CD4-positive, alpha-beta memory T cell (primary cell): ENCODE measurements at regions of chr2 and their contacts with region 1.

Region 1: GRCh38 chr2:135531231-135532228 is at the start of gene R3HDM1:
- DNase-seq: peak in 4 of 5 donors; percentile 98 to 99 (median 98)
- H3K4me3 ChIP-seq: peak within 1 kb of the TSS; percentile 86 to 98
- H3K4me3 Mint-ChIP-seq: no peak within 1 kb of the TSS
- H3K27ac ChIP-seq: peak within 1 kb of the TSS; percentile 89
- H3K27ac Mint-ChIP-seq: peak within 1 kb of the TSS in 6 of 7 donors; percentile 59 to 91 (median 78)
- H3K4me1 ChIP-seq: peaks cover 29% of the 10 kb centered on the region
- H3K4me1 Mint-ChIP-seq: peaks cover 11 to 25% (median 18%) of the 10 kb centered on the region in 4 donors
- H3K27me3 ChIP-seq: no peaks in the 10 kb centered on the region
- H3K27me3 Mint-ChIP-seq: no peaks in the 10 kb centered on the region
- total RNA-seq, gene R3HDM1: 40.5 to 42.3 TPM

Region 2: GRCh38 chr2:134918526-134919340 is 612.8 kb before region 1 on chr2 and contains the start of gene CCNT2:
- CTCF ChIA-PET with region 1: no interaction called
- POLR2A ChIA-PET with region 1: interaction called, 17 read pairs
- intact Hi-C with region 1: loop called (anchors 1 kb)
- DNase-seq: peak; percentile 99 to 100 (median 100)
- H3K4me3 ChIP-seq: peak within 1 kb of the TSS; percentile 68 to 94
- H3K4me3 Mint-ChIP-seq: peak within 1 kb of the TSS; percentile 90 to 99 (median 97)
- H3K27ac ChIP-seq: peak within 1 kb of the TSS; percentile 95
- H3K27ac Mint-ChIP-seq: peak within 1 kb of the TSS; percentile 93 to 99 (median 98)
- H3K4me1 ChIP-seq: peaks cover 52% of the 10 kb centered on the region
- H3K4me1 Mint-ChIP-seq: peaks cover 22 to 61% (median 43%) of the 10 kb centered on the region in 4 donors
- H3K27me3 ChIP-seq: no peaks in the 10 kb centered on the region
- H3K27me3 Mint-ChIP-seq: peaks cover 0 to 4% of the 10 kb centered on the region in 2 donors
- total RNA-seq, gene CCNT2: 75.4 to 80.6 TPM

Region 3: GRCh38 chr2:135052042-135052876 is 479.3 kb before region 1 on chr2 and contains the start of gene RAB3GAP1:
- CTCF ChIA-PET with region 1: no interaction called
- POLR2A ChIA-PET with region 1: interaction called, 7 read pairs
- intact Hi-C with region 1: loop called (anchors 1 kb)
- DNase-seq: peak; percentile 92 to 97 (median 94)
- H3K4me3 ChIP-seq: peak within 1 kb of the TSS; percentile 98 to 99
- H3K4me3 Mint-ChIP-seq: peak within 1 kb of the TSS; percentile 92 to 99 (median 98)
- H3K27ac ChIP-seq: peak within 1 kb of the TSS; percentile 97
- H3K27ac Mint-ChIP-seq: peak within 1 kb of the TSS; percentile 97 to 100 (median 100)
- H3K4me1 ChIP-seq: peaks cover 38% of the 10 kb centered on the region
- H3K4me1 Mint-ChIP-seq: peaks cover 23 to 48% (median 35%) of the 10 kb centered on the region in 4 donors
- H3K27me3 ChIP-seq: no peaks in the 10 kb centered on the region
- H3K27me3 Mint-ChIP-seq: no peaks in the 10 kb centered on the region
- total RNA-seq, gene RAB3GAP1: 45.1 to 46.7 TPM

Region 4: GRCh38 chr2:135741395-135742324 is 210.1 kb after region 1 on chr2 and contains the start of gene UBXN4:
- CTCF ChIA-PET with region 1: no interaction called
- POLR2A ChIA-PET with region 1: interaction called, 20 read pairs
- intact Hi-C with region 1: loop called (anchors 1 kb)
- DNase-seq: peak; percentile 88 to 97 (median 91)
- H3K4me3 ChIP-seq: peak within 1 kb of the TSS; percentile 53 to 80
- H3K4me3 Mint-ChIP-seq: peak within 1 kb of the TSS; percentile 94 to 99 (median 97)
- H3K27ac ChIP-seq: peak within 1 kb of the TSS; percentile 97
- H3K27ac Mint-ChIP-seq: peak within 1 kb of the TSS in 6 of 7 donors; percentile 96 to 99 (median 97)
- H3K4me1 ChIP-seq: peaks cover 40% of the 10 kb centered on the region
- H3K4me1 Mint-ChIP-seq: peaks cover 29 to 43% (median 37%) of the 10 kb centered on the region in 4 donors
- H3K27me3 ChIP-seq: no peaks in the 10 kb centered on the region
- H3K27me3 Mint-ChIP-seq: no peaks in the 10 kb centered on the region
- total RNA-seq, gene UBXN4: 116 to 121 TPM

Region 5: GRCh38 chr2:136486115-136486514 is 954.6 kb after region 1 on chr2:
- CTCF ChIA-PET with region 1: no interaction called
- POLR2A ChIA-PET with region 1: no interaction called
- intact Hi-C with region 1: no loop called
- DNase-seq: no peak
- H3K4me3 ChIP-seq: no peak overlapping the region
- H3K4me3 Mint-ChIP-seq: no peak overlapping the region
- H3K27ac ChIP-seq: no peak overlapping the region
- H3K27ac Mint-ChIP-seq: no peak overlapping the region
- H3K4me1 ChIP-seq: no peaks in the 10 kb centered on the region
- H3K4me1 Mint-ChIP-seq: no peaks in the 10 kb centered on the region
- H3K27me3 ChIP-seq: no peaks in the 10 kb centered on the region
- H3K27me3 Mint-ChIP-seq: peaks cover 0 to 5% of the 10 kb centered on the region in 2 donors